ENCODE measurements at regions of chr20 and their contacts with region 1.

Region 1: DNA sequence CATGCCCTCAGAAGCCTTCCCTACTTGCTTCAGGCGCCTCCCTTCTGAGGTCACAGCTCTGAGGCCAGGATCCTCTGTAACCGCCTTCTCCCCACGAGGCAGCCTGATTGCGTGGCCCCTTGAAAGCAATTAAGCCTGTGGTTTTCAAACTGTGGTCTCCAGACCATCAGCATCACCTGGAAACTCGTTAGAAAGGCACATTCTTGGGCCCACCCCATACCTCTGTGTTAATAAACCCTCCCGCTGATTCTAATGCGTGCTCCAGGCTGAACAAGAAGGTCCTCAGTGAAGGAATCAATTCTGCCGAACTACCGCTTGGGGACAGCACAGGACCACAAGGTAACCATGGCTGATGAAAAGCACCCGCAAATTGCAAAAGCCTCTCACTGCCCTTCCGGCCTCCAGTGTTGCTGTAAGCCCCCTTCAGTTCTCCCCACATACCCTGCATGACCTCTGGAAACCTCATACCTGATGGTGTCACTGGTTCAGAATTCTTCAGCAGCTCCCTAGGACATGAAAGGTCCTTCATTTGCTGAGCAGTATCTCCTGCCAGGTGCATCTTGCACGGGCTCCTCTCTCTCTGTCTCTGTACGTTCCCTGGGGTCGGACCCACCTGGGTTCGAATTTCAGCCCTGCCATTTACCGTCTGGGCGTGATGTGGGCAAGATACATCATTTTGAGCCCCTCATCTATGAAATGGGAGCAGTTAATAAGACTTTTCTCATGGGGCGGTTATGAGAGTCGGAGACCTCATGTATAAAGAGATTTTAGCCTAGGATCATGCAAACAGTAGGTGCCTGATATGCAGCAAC is 93.3 kb upstream of the RNF24 start:
- DNase-seq: peak; percentile 33 to 82 (median 46)
- ATAC-seq: peak; percentile 81
- H3K4me3 ChIP-seq: no peak overlapping the region
- H3K4me3 Mint-ChIP-seq: no peak overlapping the region
- H3K27ac ChIP-seq: no peak overlapping the region
- H3K27ac Mint-ChIP-seq: no peak overlapping the region
- H3K4me1 ChIP-seq: peaks cover 6% of the 10 kb centered on the region
- H3K4me1 Mint-ChIP-seq: peaks cover 6% of the 10 kb centered on the region
- H3K27me3 ChIP-seq: peaks cover 0 to 4% of the 10 kb centered on the region in 2 experiments
- H3K27me3 Mint-ChIP-seq: peaks cover 16% of the 10 kb centered on the region
- CTCF ChIP-seq: peak; percentile 90

Region 2: GRCh38 chr20:4091490-4092479 is 16.9 kb before region 1 on chr20:
- CTCF ChIA-PET with region 1: no interaction called
- POLR2A ChIA-PET with region 1: no interaction called
- intact Hi-C with region 1: no loop called
- DNase-seq: peak in 10 of 14 experiments; percentile 22 to 65 (median 42)
- ATAC-seq: no peak
- H3K4me3 ChIP-seq: no peak overlapping the region
- H3K4me3 Mint-ChIP-seq: no peak overlapping the region
- H3K27ac ChIP-seq: no peak overlapping the region
- H3K27ac Mint-ChIP-seq: no peak overlapping the region
- H3K4me1 ChIP-seq: no peaks in the 10 kb centered on the region
- H3K4me1 Mint-ChIP-seq: no peaks in the 10 kb centered on the region
- H3K27me3 ChIP-seq: no peaks in the 10 kb centered on the region
- H3K27me3 Mint-ChIP-seq: peaks cover 16% of the 10 kb centered on the region
- CTCF ChIP-seq: peak; percentile 59

Region 3: DNA sequence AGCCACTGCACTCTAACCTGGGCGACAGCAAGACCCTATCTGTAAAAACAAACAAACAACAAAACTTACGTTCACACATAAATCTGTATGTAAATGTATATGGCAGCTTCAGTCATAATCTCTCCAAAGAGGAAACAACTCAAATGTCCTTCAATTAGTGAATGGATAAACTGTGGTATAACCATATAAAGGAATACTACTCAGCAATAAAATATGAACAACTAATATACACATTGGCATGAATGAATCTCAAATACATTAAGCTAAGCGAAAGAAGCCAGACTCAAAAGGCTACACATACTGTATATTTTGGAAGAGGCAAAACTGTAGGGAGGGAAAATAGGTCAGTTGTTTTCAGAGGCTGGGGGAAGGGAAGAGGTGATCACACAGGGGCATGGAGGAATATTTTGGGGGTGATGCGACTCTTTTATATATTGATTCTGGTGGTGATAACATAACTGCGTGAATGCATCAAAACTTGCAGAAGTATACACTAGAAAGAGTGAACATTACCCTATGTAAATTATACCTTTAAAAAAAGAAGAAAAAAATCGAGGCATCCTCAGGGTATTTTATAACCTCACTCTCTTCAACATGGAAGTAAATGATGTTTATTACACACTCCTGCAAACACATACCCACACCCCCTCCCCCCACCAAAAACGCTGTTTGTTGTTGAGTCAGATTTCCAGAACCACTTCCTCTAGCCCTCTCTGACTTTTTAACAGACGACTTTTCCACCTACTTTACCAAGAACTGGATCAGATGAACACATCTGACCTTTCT is 21.9 kb after region 1 on chr20:
- CTCF ChIA-PET with region 1: no interaction called
- POLR2A ChIA-PET with region 1: no interaction called
- intact Hi-C with region 1: no loop called
- DNase-seq: peak in 6 of 14 experiments; percentile 32 to 55 (median 42)
- ATAC-seq: no peak
- H3K4me3 ChIP-seq: no peak overlapping the region
- H3K4me3 Mint-ChIP-seq: no peak overlapping the region
- H3K27ac ChIP-seq: no peak overlapping the region
- H3K27ac Mint-ChIP-seq: no peak overlapping the region
- H3K4me1 ChIP-seq: no peaks in the 10 kb centered on the region
- H3K4me1 Mint-ChIP-seq: peaks cover 9% of the 10 kb centered on the region
- H3K27me3 ChIP-seq: peaks cover 0 to 5% of the 10 kb centered on the region in 2 experiments
- H3K27me3 Mint-ChIP-seq: peaks cover 19% of the 10 kb centered on the region
- CTCF ChIP-seq: no peak

Region 4: DNA sequence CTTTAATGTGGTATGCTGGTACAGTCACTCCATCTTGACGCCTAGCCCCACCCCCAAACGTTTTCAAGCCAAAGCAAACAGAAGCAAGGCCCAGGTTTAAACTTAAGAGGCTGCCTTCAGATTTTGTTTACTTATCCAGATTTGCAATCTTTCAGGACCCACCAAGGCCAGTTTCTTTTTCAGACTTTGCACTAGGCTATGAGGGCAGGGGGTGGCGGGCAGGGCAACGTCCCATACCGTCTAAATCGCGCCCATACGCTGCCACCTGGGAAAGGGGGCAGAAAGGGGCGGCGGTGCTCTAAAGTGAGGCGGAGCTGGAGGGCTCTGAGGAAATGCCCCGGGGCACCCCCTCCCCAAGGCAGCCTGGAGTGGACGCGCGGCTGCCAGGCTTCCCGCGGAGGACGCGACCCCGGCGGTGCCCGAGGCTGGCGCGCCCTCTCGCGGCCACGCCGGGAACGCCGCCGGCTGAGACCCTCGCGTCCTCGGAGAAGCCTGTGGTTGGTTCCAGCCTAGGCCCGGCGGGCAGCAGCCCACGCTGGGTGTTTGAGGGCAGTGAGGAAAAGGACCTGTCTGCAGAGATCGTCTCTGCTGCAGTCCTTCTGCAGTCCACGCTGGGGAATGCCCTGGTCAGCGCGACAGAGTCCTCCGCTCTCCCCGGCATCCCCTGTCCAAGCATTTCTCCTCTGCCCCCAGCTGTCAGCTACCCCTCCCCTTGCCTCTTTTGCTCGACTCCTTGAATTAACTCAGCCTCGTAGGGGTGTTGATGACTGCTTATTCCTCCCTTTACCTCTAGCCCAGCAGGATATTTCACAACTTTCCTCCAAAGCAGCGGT is 483.8 kb after region 1 on chr20:
- CTCF ChIA-PET with region 1: no interaction called
- POLR2A ChIA-PET with region 1: no interaction called
- intact Hi-C with region 1: loop called (anchors 1 kb)
- DNase-seq: peak in 13 of 14 experiments; percentile 21 to 74 (median 45)
- ATAC-seq: peak; percentile 76
- H3K4me3 ChIP-seq: peak overlapping the region; percentile 55
- H3K4me3 Mint-ChIP-seq: peak overlapping the region; percentile 83
- H3K27ac ChIP-seq: no peak overlapping the region
- H3K27ac Mint-ChIP-seq: no peak overlapping the region
- H3K4me1 ChIP-seq: peaks cover 14% of the 10 kb centered on the region
- H3K4me1 Mint-ChIP-seq: peaks cover 7% of the 10 kb centered on the region
- H3K27me3 ChIP-seq: peaks cover 0 to 7% of the 10 kb centered on the region in 2 experiments
- H3K27me3 Mint-ChIP-seq: peaks cover 27% of the 10 kb centered on the region
- CTCF ChIP-seq: peak; percentile 93

Region 5: DNA sequence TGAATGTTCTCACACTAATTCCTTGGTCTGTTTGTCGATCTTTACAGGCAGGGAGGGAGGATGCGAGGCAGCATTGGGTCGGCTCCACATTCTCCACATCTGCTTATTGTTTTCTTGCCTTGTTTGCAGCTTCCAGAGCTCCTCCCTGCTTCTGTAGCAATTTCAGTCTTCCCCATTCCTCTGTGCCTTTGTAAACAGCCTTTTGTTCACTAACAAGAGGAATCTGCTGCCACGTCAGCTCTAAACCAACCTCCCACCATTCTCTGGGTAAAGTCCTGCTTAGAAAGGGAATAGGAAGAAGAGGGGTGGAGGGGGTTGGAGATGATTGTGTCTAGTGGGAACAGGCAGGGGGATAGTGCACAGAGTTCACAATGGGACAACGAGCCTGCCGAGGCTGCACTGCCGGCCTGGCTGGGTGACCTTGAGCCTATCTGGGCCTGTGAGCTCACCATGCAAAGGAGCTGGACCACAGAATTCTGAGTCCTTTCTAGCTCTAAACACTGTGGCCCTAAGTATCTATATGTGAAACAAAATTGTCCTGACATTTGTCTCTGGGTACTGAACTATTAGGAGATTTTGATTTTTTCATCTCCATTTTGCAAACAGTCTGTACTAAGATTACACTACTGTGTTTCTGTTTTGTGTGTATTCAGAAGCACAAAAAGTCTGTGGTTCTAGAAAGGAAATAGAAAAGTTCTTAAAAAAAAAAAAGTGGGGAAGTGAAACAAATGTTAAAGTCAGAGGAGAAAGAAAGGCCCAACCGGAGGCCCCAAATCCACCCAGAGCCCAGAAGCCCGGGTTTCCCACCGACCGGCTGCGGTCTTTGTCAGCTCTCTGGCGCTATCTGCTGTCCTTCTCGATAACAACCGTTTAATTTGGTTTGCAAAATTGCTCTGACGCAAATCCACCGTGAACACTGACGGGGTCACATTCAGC is 611.6 kb after region 1 on chr20:
- CTCF ChIA-PET with region 1: no interaction called
- POLR2A ChIA-PET with region 1: no interaction called
- intact Hi-C with region 1: loop called in 1 of 2 experiments (anchors 5 kb)
- DNase-seq: peak; percentile 60 to 88 (median 70)
- ATAC-seq: peak; percentile 95
- H3K4me3 ChIP-seq: no peak overlapping the region
- H3K4me3 Mint-ChIP-seq: no peak overlapping the region
- H3K27ac ChIP-seq: no peak overlapping the region
- H3K27ac Mint-ChIP-seq: peak overlapping the region; percentile 50
- H3K4me1 ChIP-seq: peaks cover 6% of the 10 kb centered on the region
- H3K4me1 Mint-ChIP-seq: peaks cover 12% of the 10 kb centered on the region
- H3K27me3 ChIP-seq: no peaks in the 10 kb centered on the region
- H3K27me3 Mint-ChIP-seq: no peaks in the 10 kb centered on the region
- CTCF ChIP-seq: peak; percentile 82